Mammary epithelial cell (primary cell): ENCODE measurements at regions of chr3 and their contacts with region 1.

Region 1: DNA sequence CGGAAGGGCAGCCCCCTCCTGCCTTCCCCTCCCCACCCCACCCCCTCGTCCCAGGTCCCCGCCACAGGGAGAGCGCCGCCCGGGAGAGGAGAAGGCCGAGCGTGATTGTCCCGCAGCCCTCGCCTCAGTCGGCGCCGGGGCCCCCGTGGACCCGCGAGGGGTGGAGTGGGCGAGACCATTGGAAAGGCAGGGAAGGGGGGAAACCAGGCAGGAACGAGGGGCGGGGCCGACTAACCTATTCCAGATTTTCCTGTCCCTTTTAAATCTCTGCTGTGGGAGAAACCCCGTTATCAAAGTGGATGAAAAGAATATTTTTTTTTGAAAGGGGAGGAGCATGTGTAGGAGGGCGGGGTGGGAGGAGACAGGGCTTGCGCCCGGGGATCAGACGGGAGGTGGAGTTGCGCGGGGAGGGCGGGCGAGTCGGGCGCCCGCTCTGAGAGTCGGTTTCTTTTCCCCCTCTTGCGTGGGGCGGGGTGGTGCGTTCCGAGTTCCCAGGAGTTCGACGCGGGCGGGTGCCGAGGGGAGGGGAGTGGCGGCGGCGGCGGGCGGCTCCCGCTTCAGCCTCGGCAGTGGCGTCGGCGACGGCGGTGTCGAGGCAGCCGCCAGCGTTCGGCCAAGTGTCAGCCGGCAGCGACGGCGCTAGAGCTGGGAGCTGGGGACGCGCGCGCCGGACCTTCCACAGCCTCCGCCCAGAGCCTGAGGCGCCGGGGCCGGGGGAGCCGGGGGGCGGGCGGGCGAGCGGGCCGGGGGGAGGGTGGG is at the start of gene NECTIN3:
- DNase-seq: peak; percentile 94
- H3K4me3 ChIP-seq: peak within 1 kb of the TSS; percentile 72 to 94 (median 75)
- H3K27ac ChIP-seq: peak within 1 kb of the TSS; percentile 29
- H3K4me1 ChIP-seq: peaks cover 9% of the 10 kb centered on the region
- H3K27me3 ChIP-seq: peaks cover 7% of the 10 kb centered on the region
- CTCF ChIP-seq: no peak
- total RNA-seq, gene NECTIN3: 11.6 to 12.5 TPM

Region 2: DNA sequence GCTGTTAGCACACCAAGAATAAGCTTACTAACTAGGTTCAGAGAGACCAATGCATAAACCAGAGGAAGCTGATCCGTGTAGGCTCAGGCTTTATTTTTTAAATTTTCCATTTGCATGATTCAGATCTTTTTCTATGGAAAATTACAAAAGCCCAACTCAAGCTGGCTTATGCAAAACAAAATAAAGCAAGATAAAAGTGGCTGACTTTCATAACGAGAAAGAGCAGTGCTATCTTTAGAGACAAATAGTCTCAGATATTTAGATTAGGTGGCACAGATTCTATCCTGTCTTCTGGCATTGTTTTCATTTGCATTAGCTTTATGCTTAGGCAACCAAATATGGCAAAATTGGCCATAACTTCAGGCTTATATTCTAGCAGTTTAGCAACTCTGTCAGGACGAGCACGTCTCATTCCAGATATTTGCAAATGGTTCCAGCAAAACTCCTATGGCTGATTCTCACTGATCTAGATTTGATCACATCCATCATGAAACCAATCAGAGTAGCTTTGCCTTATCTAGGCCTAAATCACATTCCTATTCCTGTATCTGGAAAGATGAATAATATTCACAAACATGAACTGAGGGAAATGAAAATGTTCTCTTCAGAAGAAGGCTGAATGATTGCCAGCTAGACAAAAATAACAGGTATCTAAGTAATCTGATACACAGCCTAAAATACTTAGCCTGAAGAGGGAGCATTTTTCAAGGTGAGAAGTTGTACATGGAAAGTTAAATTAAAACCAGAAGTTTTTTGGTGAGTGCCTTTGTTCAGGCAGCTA is 1517.7 kb before region 1 on chr3:
- CTCF ChIA-PET with region 1: no interaction called
- dilution Hi-C with region 1: no loop called
- in situ Hi-C with region 1: no loop called
- intact Hi-C with region 1: loop called (anchors 5 kb)
- DNase-seq: peak; percentile 72
- H3K4me3 ChIP-seq: no peak overlapping the region
- H3K27ac ChIP-seq: no peak overlapping the region
- H3K4me1 ChIP-seq: peaks cover 3% of the 10 kb centered on the region
- H3K27me3 ChIP-seq: no peaks in the 10 kb centered on the region
- CTCF ChIP-seq: peak in 1 of 2 donors; percentile 32

Region 3: GRCh38 chr3:110314512-110315114 is 756.8 kb before region 1 on chr3:
- CTCF ChIA-PET with region 1: no interaction called
- dilution Hi-C with region 1: no loop called
- in situ Hi-C with region 1: no loop called
- intact Hi-C with region 1: loop called (anchors 10 kb)
- DNase-seq: peak; percentile 50
- H3K4me3 ChIP-seq: no peak overlapping the region
- H3K27ac ChIP-seq: no peak overlapping the region
- H3K4me1 ChIP-seq: no peaks in the 10 kb centered on the region
- H3K27me3 ChIP-seq: no peaks in the 10 kb centered on the region
- CTCF ChIP-seq: peak; percentile 81 to 91

Region 4: GRCh38 chr3:110519071-110519470 is 552.4 kb before region 1 on chr3:
- CTCF ChIA-PET with region 1: no interaction called
- dilution Hi-C with region 1: no loop called
- in situ Hi-C with region 1: no loop called
- intact Hi-C with region 1: no loop called
- DNase-seq: no peak
- H3K4me3 ChIP-seq: no peak overlapping the region
- H3K27ac ChIP-seq: no peak overlapping the region
- H3K4me1 ChIP-seq: no peaks in the 10 kb centered on the region
- H3K27me3 ChIP-seq: no peaks in the 10 kb centered on the region
- CTCF ChIP-seq: no peak

Region 5: DNA sequence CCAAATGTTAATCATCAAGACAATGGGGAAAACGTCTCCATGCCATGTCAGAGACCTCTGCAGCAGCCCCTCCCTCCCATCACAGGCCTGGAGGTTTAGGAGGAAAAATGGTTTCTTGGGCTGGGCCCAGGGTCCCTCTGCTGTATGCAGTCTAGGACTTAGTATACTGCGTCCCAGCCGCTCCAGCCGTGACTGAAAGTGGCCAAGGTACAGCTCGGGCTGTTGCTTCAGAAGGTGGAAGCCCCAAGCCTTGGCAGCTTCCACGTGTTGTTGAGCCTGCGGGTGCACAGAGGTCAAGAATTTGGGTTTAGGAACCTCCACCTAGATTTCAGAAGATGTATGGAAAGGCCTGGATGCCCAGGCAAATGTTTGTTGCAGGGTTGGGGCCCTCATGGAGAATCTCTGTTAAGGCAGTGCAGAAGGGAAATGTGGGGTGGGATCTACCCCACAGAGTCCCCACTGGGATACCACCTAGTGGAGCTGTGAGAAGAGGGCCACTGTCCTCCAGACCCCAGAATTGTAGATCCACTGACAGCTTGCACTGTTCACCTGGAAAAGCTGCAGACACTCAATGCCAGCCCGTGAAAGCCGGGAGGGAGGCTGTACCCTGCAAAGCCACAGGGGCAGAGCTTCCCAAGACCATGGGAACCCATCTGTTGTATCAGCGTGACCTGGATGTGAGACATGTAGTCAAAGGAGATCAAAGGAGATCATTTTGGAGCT is 25.2 kb after region 1 on chr3:
- CTCF ChIA-PET with region 1: no interaction called
- dilution Hi-C with region 1: no loop called
- in situ Hi-C with region 1: no loop called
- intact Hi-C with region 1: no loop called
- DNase-seq: no peak
- H3K4me3 ChIP-seq: no peak overlapping the region
- H3K27ac ChIP-seq: no peak overlapping the region
- H3K4me1 ChIP-seq: no peaks in the 10 kb centered on the region
- H3K27me3 ChIP-seq: no peaks in the 10 kb centered on the region
- CTCF ChIP-seq: no peak

Region 6: GRCh38 chr3:111252779-111253178 is 181.3 kb after region 1 on chr3:
- CTCF ChIA-PET with region 1: no interaction called
- dilution Hi-C with region 1: no loop called
- in situ Hi-C with region 1: no loop called
- intact Hi-C with region 1: loop called (anchors 5 kb)
- DNase-seq: no peak
- H3K4me3 ChIP-seq: no peak overlapping the region
- H3K27ac ChIP-seq: no peak overlapping the region
- H3K4me1 ChIP-seq: peaks cover 10% of the 10 kb centered on the region
- H3K27me3 ChIP-seq: no peaks in the 10 kb centered on the region
- CTCF ChIP-seq: no peak

Region 7: GRCh38 chr3:112013058-112013783 is 941.8 kb after region 1 on chr3:
- CTCF ChIA-PET with region 1: no interaction called
- dilution Hi-C with region 1: no loop called
- in situ Hi-C with region 1: no loop called
- intact Hi-C with region 1: loop called (anchors 5 kb)
- DNase-seq: peak; percentile 62
- H3K4me3 ChIP-seq: no peak overlapping the region
- H3K27ac ChIP-seq: no peak overlapping the region
- H3K4me1 ChIP-seq: no peaks in the 10 kb centered on the region
- H3K27me3 ChIP-seq: no peaks in the 10 kb centered on the region
- CTCF ChIP-seq: peak; percentile 83 to 86

Region 8: DNA sequence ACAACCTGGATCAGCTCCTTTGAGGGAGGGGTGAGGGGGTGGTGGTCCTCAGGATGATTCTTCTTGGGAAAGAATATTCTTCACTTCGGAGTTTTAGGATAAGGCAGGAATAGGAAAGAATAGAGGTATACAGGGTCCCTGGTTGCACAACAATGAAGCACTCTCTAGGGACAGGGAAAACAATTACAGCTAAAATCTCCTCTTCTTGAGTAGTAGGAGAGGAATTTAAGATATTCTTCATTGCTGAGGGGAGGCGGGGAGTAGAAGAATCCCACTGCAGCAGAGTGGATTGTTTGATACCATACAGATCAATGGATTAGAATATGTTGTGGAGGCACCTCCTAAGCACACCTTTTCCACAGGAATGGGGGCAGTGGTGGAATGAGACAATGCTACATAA is 1202.1 kb after region 1 on chr3:
- CTCF ChIA-PET with region 1: no interaction called
- dilution Hi-C with region 1: no loop called
- in situ Hi-C with region 1: no loop called
- intact Hi-C with region 1: no loop called
- DNase-seq: no peak
- H3K4me3 ChIP-seq: no peak overlapping the region
- H3K27ac ChIP-seq: no peak overlapping the region
- H3K4me1 ChIP-seq: no peaks in the 10 kb centered on the region
- H3K27me3 ChIP-seq: peaks cover 3% of the 10 kb centered on the region
- CTCF ChIP-seq: no peak